H1 (cell line): ENCODE measurements at regions of chr4 and their contacts with region 1.

Region 1: GRCh38 chr4:165131247-165131832 is 18.7 kb upstream of the TMEM192 start:
- DNase-seq: peak; percentile 36 to 96
- H3K4me3 ChIP-seq: no peak overlapping the region
- H3K27ac ChIP-seq: no peak overlapping the region
- H3K4me1 ChIP-seq: no peaks in the 10 kb centered on the region
- H3K27me3 ChIP-seq: no peaks in the 10 kb centered on the region
- CTCF ChIP-seq: peak; percentile 54 to 89 (median 86)
- EP300 ChIP-seq: no peak
- POLR2A ChIP-seq: no peak
- RAD21 ChIP-seq: peak; percentile 92 to 94

Region 2: GRCh38 chr4:164943192-164943591 is 188.1 kb before region 1 on chr4:
- CTCF ChIA-PET with region 1: no interaction called
- POLR2A ChIA-PET with region 1: no interaction called
- DNase-seq: no peak
- H3K4me3 ChIP-seq: no peak overlapping the region
- H3K27ac ChIP-seq: no peak overlapping the region
- H3K4me1 ChIP-seq: no peaks in the 10 kb centered on the region
- H3K27me3 ChIP-seq: no peaks in the 10 kb centered on the region
- CTCF ChIP-seq: no peak
- EP300 ChIP-seq: no peak
- POLR2A ChIP-seq: no peak
- RAD21 ChIP-seq: no peak

Region 3: GRCh38 chr4:165118256-165118909 is 13.0 kb before region 1 on chr4:
- CTCF ChIA-PET with region 1: interaction called, 28 read pairs
- POLR2A ChIA-PET with region 1: interaction called, 3 read pairs
- DNase-seq: no peak
- H3K4me3 ChIP-seq: no peak overlapping the region
- H3K27ac ChIP-seq: no peak overlapping the region
- H3K4me1 ChIP-seq: peaks cover 0 to 3% (median 0%) of the 10 kb centered on the region in 4 experiments; a peak in 1 of 7 replicates
- H3K27me3 ChIP-seq: peaks cover 0 to 1% (median 0%) of the 10 kb centered on the region in 4 experiments; a peak in 1 of 7 replicates
- CTCF ChIP-seq: no peak
- EP300 ChIP-seq: no peak
- POLR2A ChIP-seq: no peak
- RAD21 ChIP-seq: no peak

Region 4: DNA sequence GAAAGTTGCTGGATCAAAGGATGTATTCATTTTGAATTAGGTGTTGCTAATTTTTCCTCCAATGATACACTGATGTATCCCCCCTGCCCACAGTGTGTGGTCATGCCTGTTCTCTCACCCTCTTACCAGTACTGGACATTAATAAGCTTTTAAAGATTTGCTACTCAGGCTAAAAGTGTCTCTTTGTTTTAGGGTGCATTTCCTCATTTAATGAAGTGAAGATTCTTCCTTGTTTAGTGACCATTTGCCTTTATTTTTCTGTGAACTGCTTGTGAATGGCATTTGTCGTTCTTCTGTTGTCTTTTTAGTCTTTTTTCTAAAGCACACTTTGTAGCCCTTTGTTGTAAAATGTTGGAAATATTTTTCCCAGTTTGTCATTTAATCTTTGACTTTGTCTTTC is 201.2 kb after region 1 on chr4:
- CTCF ChIA-PET with region 1: interaction called, 13 read pairs
- POLR2A ChIA-PET with region 1: interaction called, 4 read pairs
- DNase-seq: no peak
- H3K4me3 ChIP-seq: peak overlapping the region in 2 of 4 experiments; percentile 2 to 93; a peak in 3 of 8 replicates
- H3K27ac ChIP-seq: no peak overlapping the region
- H3K4me1 ChIP-seq: peaks cover 0 to 6% (median 3%) of the 10 kb centered on the region in 4 experiments; a peak in 4 of 7 replicates
- H3K27me3 ChIP-seq: no peaks in the 10 kb centered on the region
- CTCF ChIP-seq: no peak
- EP300 ChIP-seq: no peak
- POLR2A ChIP-seq: no peak
- RAD21 ChIP-seq: no peak

Region 5: GRCh38 chr4:165355900-165356300 is 224.6 kb after region 1 on chr4:
- CTCF ChIA-PET with region 1: interaction called, 235 read pairs
- POLR2A ChIA-PET with region 1: no interaction called
- DNase-seq: no peak
- H3K4me3 ChIP-seq: no peak overlapping the region
- H3K27ac ChIP-seq: no peak overlapping the region
- H3K4me1 ChIP-seq: no peaks in the 10 kb centered on the region
- H3K27me3 ChIP-seq: no peaks in the 10 kb centered on the region
- CTCF ChIP-seq: peak; percentile 61 to 83 (median 69)
- EP300 ChIP-seq: no peak
- POLR2A ChIP-seq: no peak
- RAD21 ChIP-seq: peak; percentile 72 to 80

Region 6: GRCh38 chr4:165464813-165465381 is 333.6 kb after region 1 on chr4:
- CTCF ChIA-PET with region 1: interaction called, 22 read pairs
- POLR2A ChIA-PET with region 1: no interaction called
- DNase-seq: no peak
- H3K4me3 ChIP-seq: no peak overlapping the region
- H3K27ac ChIP-seq: no peak overlapping the region
- H3K4me1 ChIP-seq: no peaks in the 10 kb centered on the region
- H3K27me3 ChIP-seq: no peaks in the 10 kb centered on the region
- CTCF ChIP-seq: peak in 2 of 3 experiments; percentile 59 to 63; a peak in 3 of 4 replicates
- EP300 ChIP-seq: no peak
- POLR2A ChIP-seq: no peak
- RAD21 ChIP-seq: peak; percentile 89 to 90

Region 7: GRCh38 chr4:165541851-165542459 is 410.6 kb after region 1 on chr4:
- CTCF ChIA-PET with region 1: no interaction called
- POLR2A ChIA-PET with region 1: no interaction called
- DNase-seq: no peak
- H3K4me3 ChIP-seq: no peak overlapping the region
- H3K27ac ChIP-seq: no peak overlapping the region
- H3K4me1 ChIP-seq: no peaks in the 10 kb centered on the region
- H3K27me3 ChIP-seq: no peaks in the 10 kb centered on the region
- CTCF ChIP-seq: no peak
- EP300 ChIP-seq: no peak
- POLR2A ChIP-seq: no peak
- RAD21 ChIP-seq: no peak